Psoas muscle (tissue), 8 donors: ENCODE measurements at regions of chr4 and their contacts with region 1.

Region 1: DNA sequence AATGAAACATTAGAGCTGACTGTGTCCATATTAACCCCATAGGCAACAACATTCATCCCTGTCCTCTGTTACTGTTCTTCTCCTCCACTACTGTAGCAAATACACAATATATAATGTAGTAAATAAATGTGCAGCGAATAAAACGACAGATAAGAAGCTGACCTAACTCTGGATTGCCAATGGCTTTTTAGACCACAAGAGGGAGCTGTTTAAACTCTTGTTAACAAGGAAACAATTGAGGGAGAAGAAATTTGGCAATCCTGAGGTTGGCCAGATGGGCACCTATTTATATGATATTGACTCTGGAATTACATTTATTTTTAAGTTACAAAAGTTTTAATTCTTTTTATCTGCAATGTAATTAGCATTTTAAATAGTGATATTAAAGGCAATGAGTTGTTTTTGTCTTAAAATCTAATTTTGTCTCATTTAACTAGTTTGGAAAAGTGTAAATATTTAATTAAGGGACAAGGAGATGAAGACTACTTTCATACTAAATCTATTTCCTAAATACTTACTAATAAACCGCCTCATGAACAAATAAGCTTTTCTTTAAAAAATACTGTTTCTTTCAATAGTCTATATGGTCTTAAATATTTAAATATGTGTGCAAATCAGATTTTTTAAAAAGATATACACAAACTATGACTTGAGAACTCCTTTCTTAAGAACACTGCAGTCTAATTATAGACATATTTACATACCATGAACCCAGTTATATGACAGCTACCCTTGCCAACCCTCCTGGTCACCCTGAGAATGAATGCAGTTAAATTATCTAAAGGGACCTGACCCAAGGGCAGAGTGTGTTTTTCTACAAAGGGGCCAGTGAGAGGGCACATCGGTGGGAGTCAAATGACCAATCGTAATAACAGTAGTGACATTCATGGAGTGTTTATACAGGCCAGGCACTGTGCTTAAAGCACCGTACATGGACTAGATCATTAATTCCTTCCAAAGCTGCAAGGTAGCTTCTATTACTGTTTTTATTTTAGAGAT is 52.9 kb upstream of the HPF1 start:
- DNase-seq: no peak
- ATAC-seq: peak in 3 of 4 donors; percentile 47 to 72 (median 49)
- H3K4me3 ChIP-seq: no peak overlapping the region
- H3K27ac ChIP-seq: no peak overlapping the region
- H3K4me1 ChIP-seq: no peaks in the 10 kb centered on the region
- H3K27me3 ChIP-seq: no peaks in the 10 kb centered on the region
- CTCF ChIP-seq: peak; percentile 88

Region 2: GRCh38 chr4:170040031-170040680 is 229.5 kb after region 1 on chr4:
- intact Hi-C with region 1: loop called in 1 of 2 experiments (anchors 5 kb)
- DNase-seq: no peak
- ATAC-seq: no peak
- H3K4me3 ChIP-seq: no peak overlapping the region
- H3K27ac ChIP-seq: no peak overlapping the region
- H3K4me1 ChIP-seq: no peaks in the 10 kb centered on the region
- H3K27me3 ChIP-seq: no peaks in the 10 kb centered on the region
- CTCF ChIP-seq: no peak

Region 3: DNA sequence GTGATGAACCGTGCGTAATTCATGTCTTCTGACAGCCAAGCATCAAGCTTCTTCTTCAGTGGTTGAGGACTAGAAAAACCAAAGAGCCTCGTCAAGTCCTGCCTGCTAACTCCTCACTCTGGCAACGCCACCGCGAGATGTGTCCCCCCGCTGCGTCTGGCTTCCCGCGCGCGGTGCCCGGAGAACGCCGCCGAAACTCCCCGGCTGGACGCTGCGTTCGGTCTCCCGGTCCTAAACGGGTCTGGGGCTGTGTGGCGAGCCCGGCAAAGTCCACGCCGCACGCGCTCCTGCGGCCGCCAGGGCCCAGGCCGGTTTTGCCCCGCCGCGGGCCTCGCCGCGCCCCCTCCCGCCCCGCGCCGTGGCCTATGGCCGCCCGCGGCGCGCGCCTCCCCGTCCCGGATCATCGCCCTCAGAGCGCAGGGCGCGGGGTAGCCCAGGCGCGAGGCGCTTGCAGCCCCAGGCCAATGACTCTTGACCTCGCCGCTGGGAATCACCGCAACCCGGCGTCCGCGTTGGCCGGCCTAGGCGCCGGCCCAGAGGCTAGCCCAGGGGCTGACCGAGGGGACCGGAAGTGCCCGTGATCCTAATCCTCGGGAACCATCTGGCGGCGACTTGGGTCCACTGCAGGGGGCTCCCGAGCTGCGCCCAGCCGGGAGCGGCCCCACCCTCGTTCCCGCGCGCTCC is 279.2 kb after region 1 on chr4 and contains the start of gene AADAT:
- intact Hi-C with region 1: loop called in 1 of 2 experiments (anchors 5 kb)
- DNase-seq: peak; percentile 77 to 89
- ATAC-seq: peak; percentile 93 to 98 (median 97)
- H3K4me3 ChIP-seq: peak within 1 kb of the TSS; percentile 76
- H3K27ac ChIP-seq: peak within 1 kb of the TSS; percentile 43
- H3K4me1 ChIP-seq: no peaks in the 10 kb centered on the region
- H3K27me3 ChIP-seq: no peaks in the 10 kb centered on the region
- CTCF ChIP-seq: peak; percentile 72
- total RNA-seq, gene AADAT: 0.58 to 1.6 (median 1.3) TPM